Common myeloid progenitor, CD34-positive (primary cell): ENCODE measurements at regions of chr22 and their contacts with region 1.

Region 1: DNA sequence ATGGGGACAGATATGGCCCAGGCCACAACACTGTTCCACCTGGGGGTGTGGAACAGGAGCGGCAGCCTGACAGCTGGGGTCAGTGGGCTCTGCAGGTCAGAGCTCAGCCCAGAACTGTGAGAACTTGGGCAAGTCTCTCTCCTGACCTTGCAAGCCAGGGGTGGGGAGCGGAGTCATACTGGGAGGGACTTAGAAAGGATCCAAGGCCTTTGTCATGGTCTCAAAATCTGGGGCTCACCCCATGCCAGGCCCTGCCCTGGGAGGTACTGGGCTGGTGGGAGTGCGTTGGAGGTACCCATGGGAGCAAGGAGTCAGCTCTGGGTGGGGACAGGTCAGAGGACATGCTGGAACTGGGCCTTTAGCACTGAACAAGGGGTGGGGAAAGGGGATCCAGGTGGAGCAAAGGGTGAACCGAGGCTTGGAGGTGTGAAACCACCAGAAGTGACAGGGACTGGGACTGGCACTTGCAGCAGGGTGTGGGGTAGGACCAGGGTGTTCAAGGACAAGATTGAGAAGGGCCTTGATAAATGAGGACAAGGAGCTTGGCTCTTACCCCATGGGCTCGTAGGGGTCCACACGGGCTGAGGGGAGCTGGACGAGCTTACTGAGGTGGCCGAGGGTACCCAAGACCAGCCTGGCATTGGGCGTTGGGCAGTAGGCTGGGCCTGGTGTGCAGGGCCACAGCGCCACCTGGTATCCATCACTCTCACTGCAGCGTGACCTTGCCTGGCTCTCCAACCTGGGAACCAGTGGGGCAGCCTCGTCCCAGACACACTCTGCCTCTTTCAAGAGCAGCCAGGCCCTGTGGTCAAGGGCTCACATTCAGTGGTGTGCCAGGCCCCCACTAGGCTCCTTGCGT is 7.4 kb upstream of the PMM1 start:
- DNase-seq: peak; percentile 44 to 51 (median 47)
- H3K4me3 ChIP-seq: no peak overlapping the region
- H3K27ac ChIP-seq: no peak overlapping the region
- H3K4me1 ChIP-seq: no peaks in the 10 kb centered on the region
- H3K27me3 ChIP-seq: peaks cover 0 to 81% (median 33%) of the 10 kb centered on the region in 5 experiments

Region 2: GRCh38 chr22:41576877-41577276 is 20.1 kb before region 1 on chr22:
- CTCF ChIA-PET with region 1: interaction called, 82 read pairs
- POLR2A ChIA-PET with region 1: no interaction called
- DNase-seq: peak; percentile 68 to 79 (median 76)
- H3K4me3 ChIP-seq: no peak overlapping the region
- H3K27ac ChIP-seq: no peak overlapping the region
- H3K4me1 ChIP-seq: no peaks in the 10 kb centered on the region
- H3K27me3 ChIP-seq: peaks cover 0 to 3% (median 0%) of the 10 kb centered on the region in 5 experiments

Region 3: DNA sequence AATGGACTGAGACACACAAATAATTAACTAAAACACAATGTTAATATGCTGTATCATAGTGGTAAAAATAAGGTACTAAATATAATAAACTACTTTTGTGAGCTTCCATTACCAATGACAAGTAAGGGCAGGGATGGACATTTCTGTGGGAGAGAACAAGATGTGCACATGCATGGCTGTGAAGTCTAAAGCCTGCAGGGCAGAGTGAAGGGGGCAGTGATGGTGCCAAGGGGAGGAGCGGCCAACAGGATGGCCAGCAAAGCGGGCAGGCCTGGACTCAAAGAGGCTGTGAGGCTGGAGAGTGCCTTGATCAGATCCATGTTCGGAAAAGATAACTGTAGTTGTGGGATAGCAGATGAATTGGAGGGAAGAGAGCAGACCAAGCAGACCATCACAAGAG is 11.4 kb after region 1 on chr22:
- CTCF ChIA-PET with region 1: interaction called, 12 read pairs
- POLR2A ChIA-PET with region 1: no interaction called
- DNase-seq: no peak
- H3K4me3 ChIP-seq: no peak overlapping the region
- H3K27ac ChIP-seq: no peak overlapping the region
- H3K4me1 ChIP-seq: peaks cover 0 to 1% (median 0%) of the 10 kb centered on the region in 4 experiments
- H3K27me3 ChIP-seq: peaks cover 0 to 79% (median 41%) of the 10 kb centered on the region in 5 experiments

Region 4: GRCh38 chr22:41697126-41697775 is 100.2 kb after region 1 on chr22:
- CTCF ChIA-PET with region 1: no interaction called
- POLR2A ChIA-PET with region 1: no interaction called
- DNase-seq: peak; percentile 87 to 91 (median 88)
- H3K4me3 ChIP-seq: peak overlapping the region in 5 of 7 experiments; percentile 13 to 75 (median 52)
- H3K27ac ChIP-seq: no peak overlapping the region
- H3K4me1 ChIP-seq: peaks cover 0 to 20% (median 17%) of the 10 kb centered on the region in 4 experiments
- H3K27me3 ChIP-seq: no peaks in the 10 kb centered on the region